Heart left ventricle (tissue), 16 donors: ENCODE measurements at regions of chr5 and their contacts with region 1.

Region 1: GRCh38 chr5:68962757-68963484 is 130.9 kb upstream of the SLC30A5 start:
- DNase-seq: peak in 4 of 5 donors; percentile 60 to 71 (median 63)
- ATAC-seq: peak; percentile 83 to 92 (median 88)
- H3K4me3 ChIP-seq: peak overlapping the region in 1 of 12 donors; percentile 10
- H3K27ac ChIP-seq: peak overlapping the region in 5 of 12 donors; percentile 0 to 38 (median 15)
- H3K4me1 ChIP-seq: peaks cover 0 to 9% (median 0%) of the 10 kb centered on the region in 12 donors
- H3K27me3 ChIP-seq: no peaks in the 10 kb centered on the region
- CTCF ChIP-seq: peak; percentile 71 to 92 (median 82)
- POLR2A ChIP-seq: no peak

Region 2: DNA sequence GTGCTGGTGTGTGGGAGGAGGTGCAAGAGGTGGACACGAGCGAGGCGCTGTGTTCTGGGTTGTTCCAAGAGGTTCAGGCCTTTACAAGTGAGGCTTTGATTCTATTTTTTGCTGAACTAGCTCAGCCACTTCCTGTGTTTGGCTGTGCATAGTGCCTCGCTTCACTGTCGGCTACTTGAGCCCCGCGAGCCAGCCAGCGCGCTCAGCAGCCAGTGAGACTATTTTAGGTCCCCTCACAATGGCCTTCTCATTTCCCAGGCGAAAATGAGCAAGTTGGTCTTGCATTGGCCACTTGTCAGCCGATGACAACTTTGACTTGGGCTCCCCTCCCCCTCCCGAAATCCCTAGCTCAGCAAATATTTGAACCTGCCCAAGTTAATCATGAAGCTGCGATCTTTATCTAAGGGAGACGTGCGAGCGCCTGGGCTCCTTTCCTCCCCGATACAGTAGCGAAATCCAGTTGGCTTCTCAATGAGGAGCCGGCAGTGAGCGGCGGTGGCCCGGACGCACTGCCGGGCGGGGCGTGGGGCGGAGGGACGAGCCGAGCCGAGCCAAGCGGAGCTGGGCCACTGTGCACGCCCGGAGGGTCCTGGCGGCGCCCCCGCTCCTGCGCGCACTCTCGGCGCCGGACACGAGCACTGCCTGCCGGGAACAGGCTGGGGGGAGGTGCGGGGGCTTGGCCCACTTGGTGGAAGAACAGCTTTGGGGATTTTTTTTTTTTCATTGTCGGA is 674.8 kb before region 1 on chr5:
- intact Hi-C with region 1: loop called (anchors 1 to 5 kb)
- DNase-seq: peak; percentile 77 to 88 (median 80)
- ATAC-seq: peak; percentile 78 to 89 (median 86)
- H3K4me3 ChIP-seq: peak overlapping the region; percentile 32 to 73 (median 60)
- H3K27ac ChIP-seq: peak overlapping the region; percentile 81 to 95 (median 92)
- H3K4me1 ChIP-seq: peaks cover 8 to 84% (median 56%) of the 10 kb centered on the region in 12 donors
- H3K27me3 ChIP-seq: no peaks in the 10 kb centered on the region
- CTCF ChIP-seq: peak in 1 of 12 donors; percentile 4
- POLR2A ChIP-seq: no peak

Region 3: DNA sequence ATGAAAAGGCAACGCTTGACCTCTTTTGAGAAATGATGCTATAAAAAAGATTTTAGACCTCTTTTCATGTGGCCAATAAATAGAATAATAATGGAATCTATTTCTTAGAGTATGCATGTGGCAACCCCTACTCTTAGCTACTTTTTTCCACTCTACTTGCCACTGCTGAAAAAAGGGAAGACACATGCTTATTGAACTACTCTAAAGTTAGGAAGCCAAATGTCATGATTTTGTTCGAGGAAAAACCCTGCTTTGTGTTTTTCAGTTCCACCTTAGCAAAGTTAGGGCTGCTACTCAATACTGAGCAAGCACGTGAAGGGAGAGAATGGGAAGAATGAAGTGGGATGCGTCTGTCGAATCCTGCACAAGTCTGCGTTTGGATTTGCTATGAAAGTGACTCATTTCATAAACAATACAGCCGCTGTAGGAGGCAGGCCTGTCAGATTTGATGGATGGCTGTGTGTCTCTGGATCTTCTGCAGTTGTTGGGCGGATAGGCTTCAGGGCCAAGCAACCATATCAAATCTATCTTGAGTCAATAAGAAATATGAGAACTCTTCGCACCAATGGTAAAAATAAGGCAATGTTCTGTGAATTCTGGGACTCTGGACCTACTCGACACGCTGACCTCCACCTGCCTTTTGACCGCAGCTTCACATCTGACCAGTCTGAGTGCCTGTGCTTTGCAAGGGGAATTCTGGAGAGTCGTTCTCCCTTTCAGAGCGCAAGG is 413.8 kb before region 1 on chr5:
- intact Hi-C with region 1: loop called in 1 of 10 experiments (anchors 10 kb)
- DNase-seq: no peak
- ATAC-seq: no peak
- H3K4me3 ChIP-seq: no peak overlapping the region
- H3K27ac ChIP-seq: no peak overlapping the region
- H3K4me1 ChIP-seq: peaks cover 0 to 5% (median 0%) of the 10 kb centered on the region in 12 donors
- H3K27me3 ChIP-seq: no peaks in the 10 kb centered on the region
- CTCF ChIP-seq: no peak
- POLR2A ChIP-seq: no peak

Region 4: GRCh38 chr5:68740204-68740910 is 222.6 kb before region 1 on chr5:
- intact Hi-C with region 1: no loop called
- DNase-seq: no peak
- ATAC-seq: no peak
- H3K4me3 ChIP-seq: no peak overlapping the region
- H3K27ac ChIP-seq: no peak overlapping the region
- H3K4me1 ChIP-seq: no peaks in the 10 kb centered on the region
- H3K27me3 ChIP-seq: no peaks in the 10 kb centered on the region
- CTCF ChIP-seq: no peak
- POLR2A ChIP-seq: no peak

Region 5: GRCh38 chr5:68798877-68799843 is 163.8 kb before region 1 on chr5:
- intact Hi-C with region 1: loop called in 1 of 10 experiments (anchors 10 kb)
- DNase-seq: no peak
- ATAC-seq: no peak
- H3K4me3 ChIP-seq: no peak overlapping the region
- H3K27ac ChIP-seq: no peak overlapping the region
- H3K4me1 ChIP-seq: peaks cover 0 to 19% (median 0%) of the 10 kb centered on the region in 12 donors
- H3K27me3 ChIP-seq: no peaks in the 10 kb centered on the region
- CTCF ChIP-seq: no peak
- POLR2A ChIP-seq: no peak

Region 6: DNA sequence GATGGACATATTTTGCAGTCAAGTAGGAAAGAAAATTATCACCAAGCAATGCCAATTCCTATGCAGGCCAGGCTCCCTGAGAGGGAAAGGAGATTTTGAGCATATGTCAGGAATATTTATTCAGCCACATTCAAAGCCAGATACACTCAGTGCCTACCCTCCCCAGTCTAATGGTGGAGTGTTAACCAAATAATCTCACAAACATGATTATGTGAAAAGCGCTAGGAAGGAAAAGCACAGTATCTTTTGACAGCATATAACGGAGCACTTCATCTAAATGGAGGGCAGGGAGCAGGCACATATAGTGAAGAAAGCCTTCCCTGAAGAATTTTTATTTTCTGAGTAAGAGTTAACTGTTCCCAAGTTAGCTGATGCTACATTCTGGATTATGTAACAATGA is 50.6 kb after region 1 on chr5:
- intact Hi-C with region 1: no loop called
- DNase-seq: no peak
- ATAC-seq: no peak
- H3K4me3 ChIP-seq: no peak overlapping the region
- H3K27ac ChIP-seq: no peak overlapping the region
- H3K4me1 ChIP-seq: no peaks in the 10 kb centered on the region
- H3K27me3 ChIP-seq: no peaks in the 10 kb centered on the region
- CTCF ChIP-seq: no peak
- POLR2A ChIP-seq: no peak

Region 7: GRCh38 chr5:69042500-69042899 is 79.6 kb after region 1 on chr5:
- intact Hi-C with region 1: no loop called
- DNase-seq: no peak
- ATAC-seq: peak in 2 of 4 donors; percentile 18 to 21
- H3K4me3 ChIP-seq: peak overlapping the region in 1 of 12 donors; percentile 65
- H3K27ac ChIP-seq: peak overlapping the region in 4 of 12 donors; percentile 11 to 77 (median 73)
- H3K4me1 ChIP-seq: peaks cover 0 to 6% (median 0%) of the 10 kb centered on the region in 12 donors
- H3K27me3 ChIP-seq: no peaks in the 10 kb centered on the region
- CTCF ChIP-seq: no peak
- POLR2A ChIP-seq: no peak